ENCODE measurements at regions of chr2 and their contacts with region 1.

Region 1: GRCh38 chr2:160332318-160332717 is 132.2 kb upstream of the ITGB6 start:
- DNase-seq: peak in 1 of 5 donors; percentile 38
- ATAC-seq: peak in 3 of 4 donors; percentile 55 to 67 (median 64)
- H3K4me3 ChIP-seq: no peak overlapping the region
- H3K27ac ChIP-seq: peak overlapping the region in 9 of 12 donors; percentile 39 to 76 (median 65)
- H3K4me1 ChIP-seq: peaks cover 3 to 98% (median 95%) of the 10 kb centered on the region in 12 donors
- H3K27me3 ChIP-seq: no peaks in the 10 kb centered on the region
- CTCF ChIP-seq: peak in 7 of 12 donors; percentile 13 to 32 (median 22)
- POLR2A ChIP-seq: no peak

Region 2: GRCh38 chr2:160367887-160368286 is 35.6 kb after region 1 on chr2:
- intact Hi-C with region 1: loop called in 3 of 10 experiments (anchors 5 kb)
- DNase-seq: no peak
- ATAC-seq: peak in 3 of 4 donors; percentile 20 to 53 (median 27)
- H3K4me3 ChIP-seq: peak overlapping the region in 6 of 12 donors; percentile 19 to 37 (median 30)
- H3K27ac ChIP-seq: peak overlapping the region in 10 of 12 donors; percentile 41 to 92 (median 62)
- H3K4me1 ChIP-seq: peaks cover 27 to 100% (median 92%) of the 10 kb centered on the region in 12 donors
- H3K27me3 ChIP-seq: no peaks in the 10 kb centered on the region
- CTCF ChIP-seq: no peak
- POLR2A ChIP-seq: no peak

Region 3: GRCh38 chr2:160381425-160381951 is 49.2 kb after region 1 on chr2:
- intact Hi-C with region 1: loop called in 1 of 10 experiments (anchors 5 kb)
- DNase-seq: no peak
- ATAC-seq: peak; percentile 8 to 72 (median 38)
- H3K4me3 ChIP-seq: no peak overlapping the region
- H3K27ac ChIP-seq: peak overlapping the region; percentile 61 to 92 (median 72)
- H3K4me1 ChIP-seq: peaks cover 23 to 100% (median 84%) of the 10 kb centered on the region in 12 donors
- H3K27me3 ChIP-seq: no peaks in the 10 kb centered on the region
- CTCF ChIP-seq: no peak
- POLR2A ChIP-seq: no peak

Region 4: GRCh38 chr2:160406591-160407392 is 74.5 kb after region 1 on chr2:
- intact Hi-C with region 1: loop called in 9 of 10 experiments (anchors 5 to 10 kb)
- DNase-seq: peak; percentile 60 to 64 (median 61)
- ATAC-seq: peak; percentile 25 to 58 (median 38)
- H3K4me3 ChIP-seq: peak overlapping the region; percentile 81 to 96 (median 90)
- H3K27ac ChIP-seq: peak overlapping the region; percentile 89 to 99 (median 95)
- H3K4me1 ChIP-seq: peaks cover 8 to 81% (median 70%) of the 10 kb centered on the region in 12 donors
- H3K27me3 ChIP-seq: no peaks in the 10 kb centered on the region
- CTCF ChIP-seq: no peak
- POLR2A ChIP-seq: peak in 1 of 2 donors; percentile 34

Region 5: DNA sequence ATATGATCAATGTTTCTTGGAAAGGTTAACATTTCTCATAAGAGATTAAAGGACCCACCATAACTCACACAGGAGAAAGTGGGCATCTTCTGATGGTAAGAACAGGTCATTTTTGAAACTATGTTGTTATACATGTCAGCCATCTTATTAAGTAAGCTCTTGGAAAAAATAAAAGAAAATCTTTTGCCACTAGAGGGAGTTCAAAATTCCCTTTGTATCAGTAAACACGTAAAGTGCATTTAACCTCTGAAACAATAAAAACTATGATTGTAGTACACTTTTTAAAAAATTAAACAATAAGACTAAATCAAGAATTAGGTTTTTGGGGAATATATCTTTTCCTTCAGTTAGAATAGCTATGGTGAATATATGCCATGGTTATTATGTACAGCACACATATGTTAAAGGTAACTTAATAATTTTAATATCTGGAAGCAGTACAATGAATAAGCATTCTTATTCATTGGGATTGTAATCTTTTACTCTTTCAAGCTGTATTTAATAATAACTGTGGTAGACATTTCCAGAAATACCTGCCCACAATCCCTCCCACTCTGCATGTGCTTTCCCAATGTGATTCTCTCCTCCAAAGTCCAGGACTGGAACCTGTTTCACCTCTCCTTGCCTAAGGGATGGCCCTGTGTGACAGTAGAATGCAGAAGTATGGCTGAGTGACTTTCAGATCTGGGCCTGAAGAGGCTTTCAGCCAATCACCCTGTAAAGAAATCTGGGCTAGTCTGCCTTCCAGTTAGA is 97.1 kb after region 1 on chr2:
- intact Hi-C with region 1: loop called in 2 of 10 experiments (anchors 5 to 10 kb)
- DNase-seq: no peak
- ATAC-seq: peak in 1 of 4 donors; percentile 40
- H3K4me3 ChIP-seq: no peak overlapping the region
- H3K27ac ChIP-seq: peak overlapping the region in 10 of 12 donors; percentile 38 to 82 (median 75)
- H3K4me1 ChIP-seq: peaks cover 0 to 70% (median 53%) of the 10 kb centered on the region in 12 donors
- H3K27me3 ChIP-seq: no peaks in the 10 kb centered on the region
- CTCF ChIP-seq: peak; percentile 42 to 70 (median 60)
- POLR2A ChIP-seq: no peak

Region 6: DNA sequence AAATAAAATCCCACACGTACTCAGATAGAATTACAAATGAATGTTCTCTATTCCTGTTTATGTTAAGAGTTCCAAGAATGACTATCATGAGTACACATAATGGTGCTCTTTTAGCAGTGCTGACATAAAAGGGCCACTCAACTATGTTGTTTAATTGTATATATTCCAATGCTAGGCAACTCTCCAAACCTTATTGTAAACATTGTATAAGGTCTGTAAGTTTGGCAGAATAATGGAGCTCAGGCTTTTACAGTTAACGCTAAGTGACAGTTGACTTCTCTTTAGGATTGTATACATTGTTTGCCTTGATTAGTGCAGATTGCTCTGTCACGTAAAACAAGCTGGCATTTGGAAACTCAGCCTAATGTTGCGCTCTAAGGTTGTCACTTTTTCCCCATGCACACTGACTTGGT is 140.5 kb after region 1 on chr2:
- intact Hi-C with region 1: no loop called
- DNase-seq: no peak
- ATAC-seq: no peak
- H3K4me3 ChIP-seq: no peak overlapping the region
- H3K27ac ChIP-seq: peak overlapping the region in 4 of 12 donors; percentile 11 to 67 (median 43)
- H3K4me1 ChIP-seq: peaks cover 0 to 73% (median 56%) of the 10 kb centered on the region in 12 donors
- H3K27me3 ChIP-seq: no peaks in the 10 kb centered on the region
- CTCF ChIP-seq: no peak
- POLR2A ChIP-seq: no peak

Region 7: GRCh38 chr2:160970052-160970965 is 638.0 kb after region 1 on chr2:
- intact Hi-C with region 1: loop called in 5 of 10 experiments (anchors 5 to 10 kb)
- DNase-seq: peak in 2 of 5 donors; percentile 29 to 30
- ATAC-seq: peak in 3 of 4 donors; percentile 58 to 75 (median 69)
- H3K4me3 ChIP-seq: peak overlapping the region in 9 of 12 donors; percentile 17 to 38 (median 29)
- H3K27ac ChIP-seq: peak overlapping the region in 11 of 12 donors; percentile 22 to 76 (median 63)
- H3K4me1 ChIP-seq: peaks cover 0 to 23% (median 10%) of the 10 kb centered on the region in 12 donors
- H3K27me3 ChIP-seq: no peaks in the 10 kb centered on the region
- CTCF ChIP-seq: peak; percentile 63 to 87 (median 80)
- POLR2A ChIP-seq: no peak

Region 8: DNA sequence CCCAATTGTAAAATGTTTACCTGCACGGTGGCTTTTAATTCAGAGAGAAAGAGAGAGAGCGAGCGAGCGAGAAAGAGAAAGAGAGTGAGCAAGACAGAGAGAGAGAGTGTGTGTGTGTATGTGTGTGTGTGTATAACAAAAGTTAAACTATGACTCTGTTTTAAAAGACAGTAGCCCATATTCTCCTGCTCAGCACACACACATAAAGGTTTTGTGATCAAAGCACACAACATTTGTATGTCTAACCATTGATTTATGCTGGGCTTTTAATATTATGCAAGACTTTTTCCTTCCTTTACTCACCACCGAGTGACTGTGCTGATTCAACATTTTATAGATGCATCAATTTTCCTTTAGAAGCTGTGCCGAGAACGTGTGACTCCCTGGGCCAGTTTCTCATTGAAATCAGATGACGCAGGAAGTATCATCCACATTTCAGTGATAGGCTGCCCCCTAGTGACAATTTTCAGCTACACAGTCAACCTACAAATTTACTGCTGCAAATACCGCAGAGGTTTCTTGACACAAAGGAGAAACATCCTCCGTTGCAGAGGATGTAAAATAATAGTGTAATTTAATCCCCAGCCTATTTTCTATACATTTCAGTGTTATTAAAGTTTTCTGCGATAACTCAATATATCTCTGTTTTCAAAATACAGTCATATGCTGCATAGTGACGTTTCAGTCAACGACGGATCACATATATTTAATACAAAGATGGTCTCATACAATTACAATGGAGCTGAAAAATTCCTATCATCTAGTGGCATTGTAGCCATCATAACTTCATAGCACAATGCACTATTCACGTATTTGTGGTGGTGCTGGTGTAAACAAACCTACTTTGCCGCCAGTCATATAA is 662.1 kb after region 1 on chr2:
- intact Hi-C with region 1: loop called in 2 of 10 experiments (anchors 5 to 10 kb)
- DNase-seq: peak in 4 of 5 donors; percentile 60 to 75 (median 66)
- ATAC-seq: peak; percentile 82 to 90 (median 88)
- H3K4me3 ChIP-seq: peak overlapping the region in 3 of 12 donors; percentile 1 to 22 (median 19)
- H3K27ac ChIP-seq: peak overlapping the region in 9 of 12 donors; percentile 20 to 75 (median 57)
- H3K4me1 ChIP-seq: peaks cover 0 to 16% (median 6%) of the 10 kb centered on the region in 12 donors
- H3K27me3 ChIP-seq: no peaks in the 10 kb centered on the region
- CTCF ChIP-seq: peak; percentile 78 to 93 (median 83)
- POLR2A ChIP-seq: no peak